ENCODE measurements at regions of chr11 and their contacts with region 1.

Region 1: GRCh38 chr11:95849087-95849825 is 59.0 kb downstream of the CEP57 start:
- DNase-seq: peak; percentile 77
- H3K4me3 ChIP-seq: no peak overlapping the region
- H3K27ac ChIP-seq: no peak overlapping the region
- H3K4me1 ChIP-seq: no peaks in the 10 kb centered on the region
- H3K27me3 ChIP-seq: no peaks in the 10 kb centered on the region
- CTCF ChIP-seq: peak; percentile 66

Region 2: DNA sequence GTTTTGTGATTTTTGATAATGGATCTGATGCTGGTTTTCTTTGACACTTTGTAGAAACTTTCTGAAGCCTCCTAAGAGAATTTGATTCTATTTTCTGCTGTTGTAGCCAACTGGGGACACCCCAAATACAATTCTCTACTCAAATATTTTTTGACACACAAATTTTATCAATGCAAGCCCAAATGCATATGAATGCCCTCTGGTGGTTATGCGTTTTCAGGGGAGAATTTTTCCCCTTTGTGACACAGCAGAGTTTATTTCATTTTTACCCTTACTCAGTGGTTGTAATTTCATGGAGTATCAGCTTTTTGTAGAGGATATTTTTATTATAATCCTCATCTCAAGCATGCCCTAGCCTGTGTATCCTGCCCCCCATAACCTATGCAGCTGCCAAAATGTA is 119.3 kb after region 1 on chr11:
- CTCF ChIA-PET with region 1: no interaction called
- POLR2A ChIA-PET with region 1: no interaction called
- intact Hi-C with region 1: loop called (anchors 5 kb)
- DNase-seq: no peak
- H3K4me3 ChIP-seq: no peak overlapping the region
- H3K27ac ChIP-seq: no peak overlapping the region
- H3K4me1 ChIP-seq: no peaks in the 10 kb centered on the region
- H3K27me3 ChIP-seq: no peaks in the 10 kb centered on the region
- CTCF ChIP-seq: peak; percentile 45; the same call in 1 of the 2 replicates